ENCODE measurements at regions of chr11 and their contacts with region 1.

Region 1: DNA sequence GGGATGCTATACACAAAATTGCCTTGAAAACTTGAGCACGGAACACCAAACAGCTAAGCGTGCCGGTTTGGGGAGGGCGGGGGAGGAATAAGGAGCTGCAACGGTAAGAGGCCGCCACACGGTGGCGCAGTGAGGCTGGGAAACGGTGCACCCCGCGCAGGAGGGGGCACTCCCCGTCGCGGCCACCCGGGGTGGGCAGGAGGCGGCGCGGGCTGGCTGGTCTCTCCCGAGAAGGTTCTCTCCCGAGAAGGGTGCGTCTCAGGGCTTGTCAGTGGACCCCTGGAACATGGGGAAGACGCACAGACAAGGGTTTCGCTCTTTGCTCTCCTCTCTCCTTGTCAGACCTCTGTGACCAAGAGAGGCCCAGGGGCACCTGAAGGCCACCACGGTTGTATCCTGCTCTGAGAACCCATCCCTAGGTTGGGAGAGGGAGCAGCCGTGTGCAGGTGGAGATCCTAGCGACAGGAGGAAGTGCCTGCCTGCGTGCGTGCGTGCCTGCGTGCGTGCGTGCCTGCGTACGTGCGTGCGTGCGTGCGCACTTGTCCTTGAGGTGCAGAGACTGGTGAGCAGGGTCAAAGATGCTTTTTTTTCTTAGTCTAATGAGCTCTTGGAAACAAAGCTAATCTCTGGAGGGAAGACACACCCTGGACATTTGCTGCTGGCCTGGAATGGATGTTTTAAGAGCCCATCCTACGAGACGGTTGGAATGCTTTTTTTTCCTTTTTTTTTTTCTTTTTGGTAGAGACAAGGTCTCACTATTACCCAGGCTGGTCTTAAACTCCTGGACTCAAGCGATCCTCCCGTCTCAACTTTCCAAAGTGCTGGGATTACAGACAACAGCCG is 18.1 kb upstream of the JAM3 start:
- H3K4me3 ChIP-seq: peak overlapping the region; percentile 22
- H3K27ac ChIP-seq: no peak overlapping the region
- H3K4me1 ChIP-seq: no peaks in the 10 kb centered on the region
- CTCF ChIP-seq: peak; percentile 88

Region 2: GRCh38 chr11:133762538-133762937 is 288.2 kb before region 1 on chr11:
- CTCF ChIA-PET with region 1: no interaction called
- POLR2A ChIA-PET with region 1: no interaction called
- H3K4me3 ChIP-seq: no peak overlapping the region
- H3K27ac ChIP-seq: no peak overlapping the region
- H3K4me1 ChIP-seq: no peaks in the 10 kb centered on the region
- CTCF ChIP-seq: no peak

Region 3: GRCh38 chr11:133927690-133928627 is 122.8 kb before region 1 on chr11:
- CTCF ChIA-PET with region 1: interaction called, 23 read pairs
- POLR2A ChIA-PET with region 1: interaction called, 6 read pairs
- H3K4me3 ChIP-seq: no peak overlapping the region
- H3K27ac ChIP-seq: no peak overlapping the region
- H3K4me1 ChIP-seq: no peaks in the 10 kb centered on the region
- CTCF ChIP-seq: peak; percentile 81

Region 4: DNA sequence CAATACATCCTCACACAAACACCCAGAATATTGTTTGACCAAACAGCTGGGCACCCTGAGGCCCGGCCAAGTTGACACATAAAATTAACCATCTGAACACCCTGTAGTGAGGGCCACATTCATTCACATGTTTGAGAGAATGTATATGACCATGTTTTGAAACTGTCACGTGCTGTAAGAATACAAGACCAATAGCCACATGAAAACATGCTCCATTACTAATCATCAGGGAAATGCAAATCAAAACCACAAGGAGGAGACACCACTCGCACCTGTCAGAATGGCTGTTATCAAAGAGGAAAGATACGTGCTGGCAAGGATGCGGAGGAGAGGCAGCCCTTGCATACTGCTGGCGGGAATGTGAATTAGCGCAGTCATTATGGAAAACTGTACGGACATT is 55.7 kb before region 1 on chr11:
- CTCF ChIA-PET with region 1: no interaction called
- POLR2A ChIA-PET with region 1: no interaction called
- H3K4me3 ChIP-seq: no peak overlapping the region
- H3K27ac ChIP-seq: no peak overlapping the region
- H3K4me1 ChIP-seq: no peaks in the 10 kb centered on the region
- CTCF ChIP-seq: no peak

Region 5: GRCh38 chr11:134033696-134034491 is 16.9 kb before region 1 on chr11:
- CTCF ChIA-PET with region 1: interaction called, 21 read pairs
- POLR2A ChIA-PET with region 1: interaction called, 6 read pairs
- H3K4me3 ChIP-seq: no peak overlapping the region
- H3K27ac ChIP-seq: no peak overlapping the region
- H3K4me1 ChIP-seq: no peaks in the 10 kb centered on the region
- CTCF ChIP-seq: no peak

Region 6: GRCh38 chr11:134062265-134063123 is 11.7 kb after region 1 on chr11:
- CTCF ChIA-PET with region 1: interaction called, 39 read pairs
- POLR2A ChIA-PET with region 1: no interaction called
- H3K4me3 ChIP-seq: no peak overlapping the region
- H3K27ac ChIP-seq: no peak overlapping the region
- H3K4me1 ChIP-seq: no peaks in the 10 kb centered on the region
- CTCF ChIP-seq: no peak

Region 7: DNA sequence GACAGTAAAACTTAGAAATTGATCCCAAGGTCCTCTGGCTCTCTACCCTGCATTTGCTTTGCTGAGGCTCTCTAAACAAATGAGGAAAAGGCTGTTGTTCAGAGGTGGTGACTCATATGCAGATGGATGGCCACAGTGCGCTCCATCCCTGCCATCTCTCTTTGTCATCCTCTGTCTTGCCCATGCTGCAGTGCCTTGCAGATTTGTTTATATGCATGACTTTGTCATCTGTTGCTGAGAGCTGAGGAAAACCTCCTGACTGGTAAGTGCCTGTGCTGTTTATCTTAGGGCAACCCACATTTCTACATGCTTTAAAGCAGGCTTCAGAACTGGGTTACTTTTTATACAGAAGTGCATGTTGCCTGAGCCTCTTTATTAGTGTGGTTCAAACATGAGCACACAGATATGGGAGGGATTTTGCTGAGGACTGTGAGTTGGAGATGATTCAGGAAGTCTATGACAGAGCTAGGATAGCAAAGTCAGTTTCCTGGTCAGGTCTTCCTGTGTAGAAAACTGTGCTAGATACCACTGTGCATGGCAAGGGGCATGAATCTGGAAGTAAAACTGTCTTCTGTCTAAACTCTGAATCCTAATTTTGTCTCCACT is 75.6 kb after region 1 on chr11:
- CTCF ChIA-PET with region 1: interaction called, 11 read pairs
- POLR2A ChIA-PET with region 1: no interaction called
- H3K4me3 ChIP-seq: no peak overlapping the region
- H3K27ac ChIP-seq: no peak overlapping the region
- H3K4me1 ChIP-seq: no peaks in the 10 kb centered on the region
- CTCF ChIP-seq: no peak

Region 8: GRCh38 chr11:134164490-134165370 is 114.0 kb after region 1 on chr11:
- CTCF ChIA-PET with region 1: interaction called, 12 read pairs
- POLR2A ChIA-PET with region 1: no interaction called
- H3K4me3 ChIP-seq: no peak overlapping the region
- H3K27ac ChIP-seq: no peak overlapping the region
- H3K4me1 ChIP-seq: no peaks in the 10 kb centered on the region
- CTCF ChIP-seq: no peak

Measured in HEK293 (cell line).